GM10248 (cell line): ENCODE measurements at regions of chr6 and their contacts with region 1.

Region 1: GRCh38 chr6:160520043-160520904 is 143.8 kb downstream of the LPA start:
- DNase-seq: peak; percentile 48
- CTCF ChIP-seq: no peak

Region 2: DNA sequence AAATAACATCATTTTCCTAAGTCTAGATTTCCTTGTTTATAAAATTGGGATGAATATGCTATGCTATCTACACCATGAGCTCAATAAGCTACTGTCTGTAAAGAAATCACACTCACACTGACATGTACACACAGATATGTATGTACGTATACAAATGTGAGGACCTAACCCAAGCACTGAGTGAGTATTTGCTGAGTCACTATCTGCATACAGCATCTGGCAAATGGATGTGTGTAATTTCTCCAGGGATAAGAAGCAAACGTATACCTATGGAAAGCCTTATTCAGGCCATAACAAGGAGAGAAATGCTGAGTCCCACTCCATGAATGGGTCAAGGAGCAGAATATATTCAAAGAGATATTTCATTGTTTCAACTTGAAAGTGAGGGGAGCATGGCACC is 10.1 kb before region 1 on chr6:
- CTCF ChIA-PET with region 1: interaction called, 27 read pairs
- POLR2A ChIA-PET with region 1: no interaction called
- DNase-seq: no peak
- CTCF ChIP-seq: no peak